ENCODE measurements at regions of chr5 and their contacts with region 1.

Region 1: GRCh38 chr5:113678924-113679575 is 165.6 kb downstream of the YTHDC2 start:
- DNase-seq: peak; percentile 30
- ATAC-seq: peak; percentile 76
- H3K4me3 ChIP-seq: no peak overlapping the region
- H3K27ac ChIP-seq: no peak overlapping the region
- H3K4me1 ChIP-seq: no peaks in the 10 kb centered on the region
- H3K27me3 ChIP-seq: no peaks in the 10 kb centered on the region
- CTCF ChIP-seq: peak; percentile 75
- EP300 ChIP-seq: no peak
- POLR2A ChIP-seq: no peak
- RAD21 ChIP-seq: peak; percentile 39; the same call in 1 of the 2 replicates

Region 2: DNA sequence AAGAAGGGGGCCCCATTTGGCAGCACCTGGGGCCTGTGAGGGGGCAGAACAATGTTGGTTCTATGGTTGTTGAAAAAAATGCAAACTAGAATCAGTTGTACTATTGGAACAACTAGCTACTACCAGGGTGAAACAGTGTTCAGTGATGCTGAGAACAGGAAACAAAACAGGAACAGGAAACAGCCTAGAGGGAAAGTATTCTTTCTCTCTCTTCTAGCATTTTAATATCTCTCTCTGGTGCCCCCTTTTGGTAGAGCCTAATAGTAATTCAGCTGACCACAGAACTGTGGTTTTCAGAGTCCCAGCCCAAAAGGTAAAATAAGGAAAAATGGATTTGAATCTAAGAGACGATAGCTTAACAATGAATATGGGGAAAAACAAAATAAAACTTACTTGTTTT is 544.8 kb after region 1 on chr5:
- CTCF ChIA-PET with region 1: no interaction called
- POLR2A ChIA-PET with region 1: no interaction called
- in situ Hi-C with region 1: no loop called
- intact Hi-C with region 1: loop called (anchors 1 kb)
- DNase-seq: peak; percentile 21
- ATAC-seq: no peak
- H3K4me3 ChIP-seq: no peak overlapping the region
- H3K27ac ChIP-seq: no peak overlapping the region
- H3K4me1 ChIP-seq: no peaks in the 10 kb centered on the region
- H3K27me3 ChIP-seq: no peaks in the 10 kb centered on the region
- CTCF ChIP-seq: peak; percentile 26; the same call in 1 of the 2 replicates
- EP300 ChIP-seq: no peak
- POLR2A ChIP-seq: no peak
- RAD21 ChIP-seq: no peak

Region 3: DNA sequence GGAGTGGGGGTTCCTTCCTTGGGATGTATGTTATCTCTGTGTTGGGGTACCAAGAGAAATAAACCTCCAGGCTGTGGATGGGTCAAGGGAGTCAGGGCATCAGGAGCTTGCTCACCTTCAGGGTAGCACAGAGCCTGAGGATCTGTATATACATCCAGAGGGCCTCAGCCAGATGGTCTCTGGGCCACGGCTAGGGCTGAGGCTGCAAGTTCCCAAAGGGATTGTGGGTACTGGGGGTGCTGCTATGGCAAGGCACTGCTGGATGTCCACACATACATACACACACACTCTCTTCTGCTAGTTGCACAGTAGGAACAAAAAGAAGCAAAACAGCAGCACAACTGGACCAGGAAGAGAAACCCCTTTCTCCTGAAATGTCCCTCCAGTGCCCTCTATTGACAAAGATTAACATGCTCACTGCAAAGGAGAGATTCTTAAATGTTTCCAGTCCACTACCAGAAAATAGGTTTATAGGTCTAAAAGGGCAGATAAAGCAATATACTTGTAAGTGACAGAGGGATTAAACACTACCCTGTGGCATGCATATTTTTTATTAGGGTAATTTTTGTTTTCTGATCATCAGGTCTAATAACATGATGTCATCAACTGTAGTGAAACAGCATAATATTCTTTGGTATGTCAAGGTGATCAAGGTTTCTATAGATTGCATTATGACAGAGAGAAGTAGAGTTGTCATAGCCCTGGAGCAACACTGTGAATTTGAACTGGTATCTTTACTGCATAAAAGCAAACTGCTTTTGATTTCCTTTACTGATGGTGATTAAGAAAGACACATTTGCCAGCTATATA is 626.6 kb after region 1 on chr5:
- CTCF ChIA-PET with region 1: no interaction called
- POLR2A ChIA-PET with region 1: no interaction called
- in situ Hi-C with region 1: no loop called
- intact Hi-C with region 1: loop called (anchors 5 kb)
- DNase-seq: peak; percentile 1
- ATAC-seq: peak; percentile 62
- H3K4me3 ChIP-seq: no peak overlapping the region
- H3K27ac ChIP-seq: no peak overlapping the region
- H3K4me1 ChIP-seq: no peaks in the 10 kb centered on the region
- H3K27me3 ChIP-seq: no peaks in the 10 kb centered on the region
- CTCF ChIP-seq: peak; percentile 40
- EP300 ChIP-seq: no peak
- POLR2A ChIP-seq: no peak
- RAD21 ChIP-seq: no peak

Region 4: GRCh38 chr5:115246361-115246991 is 1567.4 kb after region 1 on chr5:
- CTCF ChIA-PET with region 1: no interaction called
- POLR2A ChIA-PET with region 1: no interaction called
- in situ Hi-C with region 1: no loop called
- intact Hi-C with region 1: loop called (anchors 5 kb)
- DNase-seq: peak; percentile 49
- ATAC-seq: peak; percentile 76
- H3K4me3 ChIP-seq: no peak overlapping the region
- H3K27ac ChIP-seq: no peak overlapping the region
- H3K4me1 ChIP-seq: peaks cover 40% of the 10 kb centered on the region
- H3K27me3 ChIP-seq: no peaks in the 10 kb centered on the region
- CTCF ChIP-seq: peak; percentile 74
- EP300 ChIP-seq: no peak
- POLR2A ChIP-seq: no peak
- RAD21 ChIP-seq: peak; percentile 72

Measured in HepG2 (cell line).